H1 (cell line): ENCODE measurements at regions of chr18 and their contacts with region 1.

Region 1: GRCh38 chr18:8988261-8988871 is 114.1 kb upstream of the NDUFV2 start:
- DNase-seq: peak; percentile 51 to 73
- H3K4me3 ChIP-seq: no peak overlapping the region
- H3K27ac ChIP-seq: no peak overlapping the region
- H3K4me1 ChIP-seq: no peaks in the 10 kb centered on the region
- H3K27me3 ChIP-seq: no peaks in the 10 kb centered on the region
- CTCF ChIP-seq: peak; percentile 89 to 98 (median 92)
- EP300 ChIP-seq: no peak
- POLR2A ChIP-seq: no peak
- RAD21 ChIP-seq: peak; percentile 98

Region 2: DNA sequence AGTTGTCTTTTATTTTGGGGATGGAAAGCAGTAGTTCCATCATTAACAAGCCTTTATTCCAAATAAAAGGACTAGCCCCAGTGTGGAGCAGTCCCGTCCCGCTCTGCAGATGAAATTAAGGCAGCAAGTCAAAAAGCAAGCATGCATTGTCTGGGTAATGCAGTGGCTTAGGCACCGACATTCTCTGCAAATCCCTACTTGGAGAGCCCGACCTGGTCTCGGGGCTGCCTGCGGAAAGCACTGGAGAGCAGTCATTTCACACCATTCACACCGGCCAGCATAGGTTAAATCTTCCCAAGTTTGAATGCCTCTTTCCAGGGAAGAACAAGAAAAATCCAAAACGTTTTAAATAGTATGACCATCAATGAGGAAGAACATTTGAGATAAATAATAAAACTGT is 403.6 kb before region 1 on chr18:
- CTCF ChIA-PET with region 1: no interaction called
- POLR2A ChIA-PET with region 1: no interaction called
- DNase-seq: no peak
- H3K4me3 ChIP-seq: no peak overlapping the region
- H3K27ac ChIP-seq: no peak overlapping the region
- H3K4me1 ChIP-seq: peaks cover 0 to 2% (median 0%) of the 10 kb centered on the region in 4 experiments; a peak in 1 of 7 replicates
- H3K27me3 ChIP-seq: no peaks in the 10 kb centered on the region; a peak in 1 of 7 replicates
- CTCF ChIP-seq: no peak
- EP300 ChIP-seq: no peak
- POLR2A ChIP-seq: no peak
- RAD21 ChIP-seq: no peak

Region 3: GRCh38 chr18:8654503-8655451 is 333.6 kb before region 1 on chr18:
- CTCF ChIA-PET with region 1: interaction called, 40 read pairs
- POLR2A ChIA-PET with region 1: no interaction called
- DNase-seq: no peak
- H3K4me3 ChIP-seq: no peak overlapping the region
- H3K27ac ChIP-seq: no peak overlapping the region
- H3K4me1 ChIP-seq: peaks cover 0 to 2% (median 0%) of the 10 kb centered on the region in 4 experiments; a peak in 3 of 7 replicates
- H3K27me3 ChIP-seq: no peaks in the 10 kb centered on the region
- CTCF ChIP-seq: peak in 2 of 3 experiments; percentile 23 to 42; a peak in 2 of 4 replicates
- EP300 ChIP-seq: no peak
- POLR2A ChIP-seq: no peak
- RAD21 ChIP-seq: peak; percentile 65 to 72

Region 4: GRCh38 chr18:8661754-8662569 is 326.4 kb before region 1 on chr18:
- CTCF ChIA-PET with region 1: interaction called, 40 read pairs
- POLR2A ChIA-PET with region 1: no interaction called
- DNase-seq: peak; percentile 56 to 72
- H3K4me3 ChIP-seq: peak overlapping the region in 2 of 4 experiments; percentile 15 to 46; a peak in 4 of 8 replicates
- H3K27ac ChIP-seq: peak overlapping the region; percentile 28
- H3K4me1 ChIP-seq: peaks cover 5 to 21% (median 13%) of the 10 kb centered on the region in 4 experiments
- H3K27me3 ChIP-seq: no peaks in the 10 kb centered on the region
- CTCF ChIP-seq: no peak
- EP300 ChIP-seq: 0 out of 3 replicates have a peak, but pooled peaks of 1 of the 2 experiments have one; percentile 11
- POLR2A ChIP-seq: no peak; a peak in 1 of 3 replicates
- RAD21 ChIP-seq: no peak

Region 5: GRCh38 chr18:8696749-8697211 is 291.6 kb before region 1 on chr18:
- CTCF ChIA-PET with region 1: interaction called, 21 read pairs
- POLR2A ChIA-PET with region 1: no interaction called
- DNase-seq: peak in 1 of 2 experiments; percentile 95
- H3K4me3 ChIP-seq: no peak overlapping the region
- H3K27ac ChIP-seq: no peak overlapping the region
- H3K4me1 ChIP-seq: no peaks in the 10 kb centered on the region
- H3K27me3 ChIP-seq: no peaks in the 10 kb centered on the region
- CTCF ChIP-seq: peak; percentile 72 to 82 (median 75)
- EP300 ChIP-seq: no peak
- POLR2A ChIP-seq: no peak
- RAD21 ChIP-seq: peak; percentile 73 to 79

Region 6: GRCh38 chr18:8705280-8705940 is 283.0 kb before region 1 on chr18 and contains the start of gene MTCL1:
- CTCF ChIA-PET with region 1: interaction called, 26 read pairs
- POLR2A ChIA-PET with region 1: interaction called, 4 read pairs
- DNase-seq: peak in 1 of 2 experiments; percentile 70
- H3K4me3 ChIP-seq: peak within 1 kb of the TSS; percentile 59 to 72 (median 70)
- H3K27ac ChIP-seq: no peak within 1 kb of the TSS
- H3K4me1 ChIP-seq: peaks cover 13 to 23% (median 19%) of the 10 kb centered on the region in 4 experiments
- H3K27me3 ChIP-seq: peaks cover 0 to 7% (median 5%) of the 10 kb centered on the region in 4 experiments; a peak in 5 of 7 replicates
- CTCF ChIP-seq: no peak
- EP300 ChIP-seq: no peak
- POLR2A ChIP-seq: no peak
- RAD21 ChIP-seq: no peak
- total RNA-seq, gene MTCL1: 60.8 and 62.0 TPM in 2 replicates

Region 7: DNA sequence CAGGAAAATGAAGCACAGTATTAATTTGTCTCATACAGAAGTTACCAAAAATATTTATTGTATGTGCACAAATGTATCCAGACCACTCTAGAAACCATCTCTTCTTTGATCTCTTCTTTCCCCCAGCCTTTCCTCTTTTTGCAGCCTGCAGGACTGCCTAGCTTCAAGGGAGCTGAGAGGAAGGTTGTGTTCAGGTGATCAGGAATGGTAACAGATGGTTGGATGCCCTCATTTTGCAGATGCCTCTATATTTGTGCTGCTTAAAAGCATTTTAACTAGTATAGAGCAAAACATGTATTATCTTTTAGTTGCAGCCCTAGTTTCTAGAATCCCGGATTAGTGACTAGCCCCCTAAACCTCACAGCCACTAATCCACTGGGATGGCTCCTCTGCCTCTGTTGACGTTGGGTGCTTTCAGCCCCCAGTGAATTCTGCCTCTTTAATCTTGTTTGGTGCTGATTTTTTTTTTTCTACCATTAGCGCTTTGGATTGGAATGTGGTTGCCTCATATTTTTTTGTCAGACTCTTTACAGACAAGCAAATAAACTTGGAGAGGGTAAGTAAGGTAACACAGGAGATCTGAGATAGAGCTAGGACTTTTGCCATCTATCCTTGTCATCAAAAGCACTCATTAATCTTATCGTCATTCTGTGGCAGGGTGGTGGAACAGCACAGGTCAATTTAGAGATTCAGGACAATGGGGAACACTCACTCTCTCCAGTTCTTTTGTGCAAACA is 10.3 kb after region 1 on chr18:
- CTCF ChIA-PET with region 1: interaction called, 16 read pairs
- POLR2A ChIA-PET with region 1: no interaction called
- DNase-seq: no peak
- H3K4me3 ChIP-seq: no peak overlapping the region
- H3K27ac ChIP-seq: no peak overlapping the region
- H3K4me1 ChIP-seq: peaks cover 0 to 3% (median 0%) of the 10 kb centered on the region in 4 experiments; a peak in 3 of 7 replicates
- H3K27me3 ChIP-seq: no peaks in the 10 kb centered on the region; a peak in 1 of 7 replicates
- CTCF ChIP-seq: no peak
- EP300 ChIP-seq: no peak
- POLR2A ChIP-seq: no peak
- RAD21 ChIP-seq: no peak

Region 8: GRCh38 chr18:9008709-9009635 is 20.6 kb after region 1 on chr18:
- CTCF ChIA-PET with region 1: no interaction called
- POLR2A ChIA-PET with region 1: no interaction called
- DNase-seq: no peak
- H3K4me3 ChIP-seq: no peak overlapping the region
- H3K27ac ChIP-seq: no peak overlapping the region
- H3K4me1 ChIP-seq: no peaks in the 10 kb centered on the region
- H3K27me3 ChIP-seq: no peaks in the 10 kb centered on the region
- CTCF ChIP-seq: no peak
- EP300 ChIP-seq: no peak
- POLR2A ChIP-seq: no peak
- RAD21 ChIP-seq: no peak

Region 9: GRCh38 chr18:9020221-9020620 is 31.9 kb after region 1 on chr18:
- CTCF ChIA-PET with region 1: no interaction called
- POLR2A ChIA-PET with region 1: no interaction called
- DNase-seq: no peak
- H3K4me3 ChIP-seq: no peak overlapping the region
- H3K27ac ChIP-seq: no peak overlapping the region
- H3K4me1 ChIP-seq: peaks cover 3 to 16% (median 11%) of the 10 kb centered on the region in 4 experiments
- H3K27me3 ChIP-seq: no peaks in the 10 kb centered on the region; a peak in 2 of 7 replicates
- CTCF ChIP-seq: no peak
- EP300 ChIP-seq: no peak
- POLR2A ChIP-seq: no peak
- RAD21 ChIP-seq: no peak